Heart left ventricle (tissue), 16 donors: ENCODE measurements at regions of chr17 and their contacts with region 1.

Region 1: GRCh38 chr17:32386844-32387243 is 36.9 kb downstream of the ZNF207 start:
- DNase-seq: no peak
- ATAC-seq: no peak
- H3K4me3 ChIP-seq: no peak overlapping the region
- H3K27ac ChIP-seq: no peak overlapping the region
- H3K4me1 ChIP-seq: no peaks in the 10 kb centered on the region
- H3K27me3 ChIP-seq: no peaks in the 10 kb centered on the region
- CTCF ChIP-seq: no peak
- POLR2A ChIP-seq: no peak

Region 2: DNA sequence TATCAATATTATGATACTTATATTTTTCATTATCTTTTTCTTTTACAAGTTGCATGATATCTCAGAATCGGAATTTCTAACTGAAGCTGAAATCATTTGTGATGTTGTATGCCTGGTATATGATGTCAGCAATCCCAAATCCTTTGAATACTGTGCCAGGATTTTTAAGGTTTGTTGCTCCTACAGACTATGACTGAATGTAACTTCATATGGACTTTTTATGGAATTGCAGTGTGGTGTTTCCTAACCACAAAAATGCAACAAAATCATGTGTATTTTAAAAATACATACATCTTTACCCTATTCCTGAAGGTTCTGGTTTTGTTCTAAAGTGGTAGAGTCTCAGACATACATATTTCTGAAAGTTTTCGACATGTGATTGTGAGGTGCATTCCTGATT is 180.0 kb before region 1 on chr17:
- intact Hi-C with region 1: loop called in 1 of 10 experiments (anchors 5 kb)
- DNase-seq: no peak
- ATAC-seq: no peak
- H3K4me3 ChIP-seq: no peak overlapping the region
- H3K27ac ChIP-seq: no peak overlapping the region
- H3K4me1 ChIP-seq: no peaks in the 10 kb centered on the region
- H3K27me3 ChIP-seq: no peaks in the 10 kb centered on the region
- CTCF ChIP-seq: no peak
- POLR2A ChIP-seq: no peak

Region 3: GRCh38 chr17:32275060-32276042 is 111.5 kb before region 1 on chr17:
- intact Hi-C with region 1: no loop called
- DNase-seq: peak in 4 of 5 donors; percentile 31 to 77 (median 70)
- ATAC-seq: peak in 1 of 4 donors; percentile 68
- H3K4me3 ChIP-seq: no peak overlapping the region
- H3K27ac ChIP-seq: no peak overlapping the region
- H3K4me1 ChIP-seq: peaks cover 0 to 11% (median 0%) of the 10 kb centered on the region in 12 donors
- H3K27me3 ChIP-seq: peaks cover 0 to 17% (median 0%) of the 10 kb centered on the region in 9 donors
- CTCF ChIP-seq: no peak
- POLR2A ChIP-seq: no peak

Region 4: GRCh38 chr17:32319548-32319905 is 67.3 kb before region 1 on chr17:
- intact Hi-C with region 1: no loop called
- DNase-seq: peak; percentile 70 to 86 (median 77)
- ATAC-seq: peak; percentile 76 to 96 (median 90)
- H3K4me3 ChIP-seq: peak overlapping the region in 2 of 12 donors; percentile 12 to 42
- H3K27ac ChIP-seq: no peak overlapping the region
- H3K4me1 ChIP-seq: peaks cover 0 to 12% (median 0%) of the 10 kb centered on the region in 12 donors
- H3K27me3 ChIP-seq: peaks cover 0 to 4% (median 0%) of the 10 kb centered on the region in 9 donors
- CTCF ChIP-seq: peak; percentile 84 to 96 (median 94)
- POLR2A ChIP-seq: no peak

Region 5: GRCh38 chr17:32444308-32445073 is 57.6 kb after region 1 on chr17 and contains the start of gene PSMD11:
- intact Hi-C with region 1: loop called in 1 of 10 experiments (anchors 10 kb)
- DNase-seq: peak; percentile 98 to 99 (median 99)
- ATAC-seq: peak; percentile 97 to 98 (median 98)
- H3K4me3 ChIP-seq: peak within 1 kb of the TSS; percentile 66 to 98 (median 88)
- H3K27ac ChIP-seq: peak within 1 kb of the TSS; percentile 19 to 93 (median 84)
- H3K4me1 ChIP-seq: peaks cover 0 to 32% (median 18%) of the 10 kb centered on the region in 12 donors
- H3K27me3 ChIP-seq: no peaks in the 10 kb centered on the region
- CTCF ChIP-seq: peak in 7 of 12 donors; percentile 2 to 100 (median 96)
- POLR2A ChIP-seq: peak in 1 of 2 donors; percentile 66
- total RNA-seq, gene PSMD11: 52.7 to 94.8 (median 78.9) TPM